ENCODE measurements at regions of chr9 and their contacts with region 1.

Region 1: DNA sequence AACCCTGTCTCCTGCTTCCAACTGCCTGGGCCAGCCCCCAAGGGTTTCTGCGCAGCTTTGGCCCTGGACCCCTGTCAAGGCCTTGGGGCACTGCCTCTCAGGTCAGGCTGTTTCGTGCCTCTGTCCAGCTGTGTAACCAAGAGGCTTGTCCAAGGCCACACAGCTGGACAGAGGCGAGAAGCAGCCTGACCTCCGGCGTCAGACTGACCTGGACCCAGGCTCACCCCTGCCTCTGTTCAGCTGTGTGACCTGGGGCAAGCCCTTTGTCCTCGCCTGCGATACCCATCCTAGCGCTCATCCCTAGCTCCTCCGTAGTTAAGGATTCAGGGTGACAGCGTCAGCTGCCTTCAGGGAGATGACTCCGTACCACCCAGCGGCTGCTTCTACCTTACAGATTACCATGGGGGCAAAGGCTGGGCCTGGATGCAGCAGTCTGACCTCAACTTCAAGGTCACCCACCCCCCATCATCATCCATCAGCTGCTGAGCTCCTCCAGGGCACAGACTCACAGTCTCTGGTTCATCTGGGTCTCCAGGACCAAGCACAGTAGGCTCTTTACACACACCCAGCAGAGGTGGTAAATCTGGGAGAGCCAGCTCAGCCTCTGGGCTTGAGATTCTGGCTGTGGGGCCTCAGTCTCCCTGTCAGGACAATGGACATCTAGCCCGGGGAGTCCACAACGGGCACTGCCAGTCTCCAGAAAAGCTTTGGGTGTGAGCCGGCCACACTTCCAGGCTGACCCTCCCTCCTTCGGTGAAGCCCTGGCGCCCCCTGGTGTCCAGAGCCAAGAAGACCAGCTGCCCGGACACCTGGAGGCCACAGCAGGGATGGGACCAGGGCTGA is 7.9 kb downstream of the AK1 start:
- DNase-seq: peak; percentile 62 to 87 (median 80)
- H3K4me3 ChIP-seq: no peak overlapping the region
- H3K27ac ChIP-seq: peak overlapping the region in 17 of 59 donors; percentile 10 to 64 (median 34)
- H3K27me3 ChIP-seq: no peaks in the 10 kb centered on the region
- CTCF ChIP-seq: peak; percentile 57 to 89 (median 81)

Region 2: GRCh38 chr9:127437497-127438264 is 431.9 kb before region 1 on chr9:
- intact Hi-C with region 1: no loop called
- DNase-seq: no peak
- H3K4me3 ChIP-seq: no peak overlapping the region
- H3K27ac ChIP-seq: no peak overlapping the region
- H3K27me3 ChIP-seq: no peaks in the 10 kb centered on the region
- CTCF ChIP-seq: no peak

Region 3: GRCh38 chr9:127611899-127612790 is 257.4 kb before region 1 on chr9 and contains the start of gene STXBP1:
- intact Hi-C with region 1: loop called in 1 of 2 experiments (anchors 5 kb)
- DNase-seq: peak; percentile 79 to 97 (median 90)
- H3K4me3 ChIP-seq: peak within 1 kb of the TSS; percentile 75 to 98 (median 93)
- H3K27ac ChIP-seq: peak within 1 kb of the TSS; percentile 68 to 98 (median 92)
- H3K27me3 ChIP-seq: no peaks in the 10 kb centered on the region
- CTCF ChIP-seq: peak in 13 of 56 donors; percentile 6 to 30 (median 17)
- total RNA-seq, gene STXBP1: 334 to 1,348 (median 969) TPM

Region 4: DNA sequence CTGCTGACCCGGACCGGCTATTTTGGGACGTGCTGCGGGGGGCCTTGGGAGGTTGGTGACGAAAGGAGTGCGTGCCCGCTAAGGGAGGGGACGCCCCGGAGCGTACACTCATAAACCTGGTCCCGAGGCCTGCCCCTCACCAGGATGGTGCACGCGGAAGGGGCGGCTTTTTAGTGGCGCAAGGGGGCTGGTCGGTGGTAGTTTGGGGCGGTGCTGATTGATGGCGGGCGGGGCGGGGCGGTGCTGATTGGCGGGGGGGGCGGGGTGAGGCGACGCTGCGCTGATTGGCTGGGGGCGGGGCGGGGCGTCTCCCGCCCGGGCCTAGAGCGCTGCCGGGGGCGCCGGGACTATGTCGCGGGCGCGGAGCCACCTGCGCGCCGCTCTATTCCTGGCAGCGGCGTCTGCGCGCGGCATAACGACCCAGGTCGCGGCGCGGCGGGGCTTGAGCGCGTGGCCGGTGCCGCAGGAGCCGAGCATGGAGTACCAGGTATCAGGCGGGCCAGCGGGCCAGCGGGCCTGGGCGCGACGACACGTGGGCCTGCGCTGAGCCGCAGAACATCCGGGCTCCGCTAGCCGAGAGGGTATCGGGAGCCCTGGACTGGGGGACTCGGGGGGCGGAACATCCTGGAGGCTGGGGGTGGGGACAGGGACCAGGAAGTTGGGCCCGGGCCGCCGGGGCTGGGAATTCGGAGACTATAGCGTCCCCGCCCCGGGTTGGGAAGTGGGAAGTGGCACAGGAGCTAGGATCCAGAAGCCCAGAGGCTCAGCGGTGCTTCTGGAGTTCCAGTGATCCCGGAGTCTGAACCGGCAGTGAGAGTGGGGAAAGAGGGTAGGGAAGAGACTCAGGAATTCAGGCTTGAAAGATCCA is 66.7 kb before region 1 on chr9 and contains the start of gene FPGS:
- intact Hi-C with region 1: loop called (anchors 2 to 5 kb)
- DNase-seq: peak; percentile 62 to 90 (median 80)
- H3K4me3 ChIP-seq: peak within 1 kb of the TSS; percentile 53 to 93 (median 83)
- H3K27ac ChIP-seq: peak within 1 kb of the TSS; percentile 32 to 94 (median 88)
- H3K27me3 ChIP-seq: no peaks in the 10 kb centered on the region
- CTCF ChIP-seq: peak in 19 of 56 donors; percentile 3 to 39 (median 16)
- total RNA-seq, gene FPGS: 19.5 to 55.8 (median 36.6) TPM